ENCODE measurements at regions of chr18 and their contacts with region 1.

Region 1: DNA sequence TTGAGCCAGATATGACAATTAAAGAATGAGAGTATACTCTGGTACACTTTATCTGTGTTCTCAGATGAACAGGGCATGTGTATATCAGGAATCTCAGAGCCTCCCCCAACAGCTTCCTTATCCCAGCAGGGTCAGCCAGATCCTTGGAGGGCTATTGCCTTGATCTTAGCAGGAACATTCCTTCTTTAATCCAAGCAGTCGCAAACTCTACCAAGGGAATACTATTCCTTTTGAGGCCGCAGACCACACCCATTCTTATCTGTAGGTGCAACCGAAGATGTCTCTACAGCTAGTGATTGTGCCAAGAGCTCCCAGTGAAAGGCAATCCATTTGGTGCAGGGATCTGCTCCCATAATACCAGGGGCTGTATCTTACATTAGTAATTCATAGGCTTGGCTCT is 118.3 kb upstream of the DOK6 start:
- DNase-seq: no peak
- H3K4me3 ChIP-seq: no peak overlapping the region
- H3K27ac ChIP-seq: no peak overlapping the region
- H3K4me1 ChIP-seq: no peaks in the 10 kb centered on the region
- H3K27me3 ChIP-seq: no peaks in the 10 kb centered on the region
- CTCF ChIP-seq: no peak
- EP300 ChIP-seq: no peak
- POLR2A ChIP-seq: no peak

Region 2: GRCh38 chr18:69177702-69178101 is 104.7 kb before region 1 on chr18:
- in situ Hi-C with region 1: loop called in 1 of 4 experiments (anchors 25 kb)
- intact Hi-C with region 1: no loop called
- DNase-seq: no peak
- H3K4me3 ChIP-seq: no peak overlapping the region
- H3K27ac ChIP-seq: no peak overlapping the region
- H3K4me1 ChIP-seq: no peaks in the 10 kb centered on the region
- H3K27me3 ChIP-seq: no peaks in the 10 kb centered on the region
- CTCF ChIP-seq: no peak
- EP300 ChIP-seq: no peak
- POLR2A ChIP-seq: no peak

Region 3: GRCh38 chr18:69330370-69331005 is 48.1 kb after region 1 on chr18:
- in situ Hi-C with region 1: no loop called
- intact Hi-C with region 1: no loop called
- DNase-seq: no peak
- H3K4me3 ChIP-seq: no peak overlapping the region
- H3K27ac ChIP-seq: no peak overlapping the region
- H3K4me1 ChIP-seq: no peaks in the 10 kb centered on the region
- H3K27me3 ChIP-seq: no peaks in the 10 kb centered on the region
- CTCF ChIP-seq: no peak
- EP300 ChIP-seq: no peak
- POLR2A ChIP-seq: no peak

Region 4: DNA sequence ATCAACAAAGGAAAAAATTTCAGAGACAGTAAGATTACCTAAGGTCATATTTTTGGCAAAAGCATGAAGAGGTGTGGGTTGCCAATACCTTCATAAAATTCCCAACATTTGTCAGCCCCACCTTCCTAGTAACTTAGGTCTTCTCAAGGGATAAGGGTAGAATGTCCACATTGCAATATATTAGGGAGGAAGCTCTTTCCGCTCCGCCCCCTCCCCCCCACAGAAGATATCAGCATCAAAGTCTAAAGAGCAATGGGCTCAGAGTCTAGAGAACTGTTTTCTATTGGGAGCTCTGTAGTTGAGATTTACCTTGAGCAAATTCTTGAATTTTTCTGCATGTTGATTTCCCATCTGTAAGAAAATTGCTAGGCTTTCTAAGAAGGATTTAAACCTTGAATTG is 465.0 kb after region 1 on chr18:
- in situ Hi-C with region 1: no loop called
- intact Hi-C with region 1: no loop called
- DNase-seq: no peak
- H3K4me3 ChIP-seq: no peak overlapping the region
- H3K27ac ChIP-seq: no peak overlapping the region
- H3K4me1 ChIP-seq: no peaks in the 10 kb centered on the region
- H3K27me3 ChIP-seq: no peaks in the 10 kb centered on the region
- CTCF ChIP-seq: no peak
- EP300 ChIP-seq: no peak
- POLR2A ChIP-seq: no peak

Region 5: GRCh38 chr18:70015127-70015526 is 732.8 kb after region 1 on chr18:
- in situ Hi-C with region 1: no loop called
- intact Hi-C with region 1: no loop called
- DNase-seq: no peak
- H3K4me3 ChIP-seq: no peak overlapping the region
- H3K27ac ChIP-seq: no peak overlapping the region
- H3K4me1 ChIP-seq: no peaks in the 10 kb centered on the region
- H3K27me3 ChIP-seq: no peaks in the 10 kb centered on the region
- CTCF ChIP-seq: no peak
- EP300 ChIP-seq: no peak
- POLR2A ChIP-seq: no peak

Measured in transverse colon (tissue), 4 donors.